Activated CD8-positive, alpha-beta memory T cell treated with anti-CD3 and anti-CD28 coated beads, Interleukin-2, amount 10 ng/mL, durations not matched to agents 7 days and 5 days (primary cell): ENCODE measurements at regions of chr1 and their contacts with region 1.

Region 1: GRCh38 chr1:17263936-17264335 is 15.0 kb downstream of the PADI3 start:
- DNase-seq: no peak
- ATAC-seq: no peak
- H3K4me3 Mint-ChIP-seq: no peak overlapping the region
- H3K27ac Mint-ChIP-seq: no peak overlapping the region
- H3K4me1 Mint-ChIP-seq: no peaks in the 10 kb centered on the region
- H3K27me3 Mint-ChIP-seq: peaks cover 10% of the 10 kb centered on the region

Region 2: GRCh38 chr1:17274186-17275170 is 10.5 kb after region 1 on chr1:
- CTCF ChIA-PET with region 1: interaction called, 11 read pairs
- DNase-seq: peak; percentile 55
- ATAC-seq: peak; percentile 53
- H3K4me3 Mint-ChIP-seq: no peak overlapping the region
- H3K27ac Mint-ChIP-seq: peak overlapping the region; percentile 52
- H3K4me1 Mint-ChIP-seq: peaks cover 10% of the 10 kb centered on the region
- H3K27me3 Mint-ChIP-seq: peaks cover 8% of the 10 kb centered on the region